Cardiac septum (tissue), 1 donor: ENCODE measurements at regions of chr7 and their contacts with region 1.

Region 1: GRCh38 chr7:74083117-74083876 is at the start of gene LIMK1:
- DNase-seq: peak; percentile 92
- total RNA-seq, gene LIMK1: 13.6 TPM

Region 2: DNA sequence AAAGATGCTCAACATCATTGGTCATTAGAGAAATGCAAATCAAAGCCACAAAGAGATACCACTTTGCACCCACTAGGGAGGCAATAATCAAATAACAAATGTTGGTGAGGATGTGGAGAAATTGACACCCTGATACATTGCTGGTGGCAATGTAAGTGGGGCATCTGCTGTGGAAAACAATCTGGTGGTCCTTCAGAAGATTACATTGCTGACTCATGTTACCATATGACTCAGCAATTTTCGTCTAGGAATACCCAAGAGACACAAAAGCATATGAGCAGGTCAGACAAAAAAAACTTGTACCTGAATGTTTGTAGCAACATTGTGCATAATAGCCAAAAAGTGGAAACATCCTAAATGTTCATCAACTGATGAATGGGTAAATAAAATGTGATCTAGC is 308.4 kb before region 1 on chr7:
- intact Hi-C with region 1: no loop called
- DNase-seq: no peak

Region 3: GRCh38 chr7:73894733-73895551 is 188.4 kb before region 1 on chr7:
- intact Hi-C with region 1: no loop called
- DNase-seq: no peak

Region 4: GRCh38 chr7:74002474-74003017 is 80.8 kb before region 1 on chr7:
- intact Hi-C with region 1: no loop called
- DNase-seq: peak; percentile 86

Region 5: DNA sequence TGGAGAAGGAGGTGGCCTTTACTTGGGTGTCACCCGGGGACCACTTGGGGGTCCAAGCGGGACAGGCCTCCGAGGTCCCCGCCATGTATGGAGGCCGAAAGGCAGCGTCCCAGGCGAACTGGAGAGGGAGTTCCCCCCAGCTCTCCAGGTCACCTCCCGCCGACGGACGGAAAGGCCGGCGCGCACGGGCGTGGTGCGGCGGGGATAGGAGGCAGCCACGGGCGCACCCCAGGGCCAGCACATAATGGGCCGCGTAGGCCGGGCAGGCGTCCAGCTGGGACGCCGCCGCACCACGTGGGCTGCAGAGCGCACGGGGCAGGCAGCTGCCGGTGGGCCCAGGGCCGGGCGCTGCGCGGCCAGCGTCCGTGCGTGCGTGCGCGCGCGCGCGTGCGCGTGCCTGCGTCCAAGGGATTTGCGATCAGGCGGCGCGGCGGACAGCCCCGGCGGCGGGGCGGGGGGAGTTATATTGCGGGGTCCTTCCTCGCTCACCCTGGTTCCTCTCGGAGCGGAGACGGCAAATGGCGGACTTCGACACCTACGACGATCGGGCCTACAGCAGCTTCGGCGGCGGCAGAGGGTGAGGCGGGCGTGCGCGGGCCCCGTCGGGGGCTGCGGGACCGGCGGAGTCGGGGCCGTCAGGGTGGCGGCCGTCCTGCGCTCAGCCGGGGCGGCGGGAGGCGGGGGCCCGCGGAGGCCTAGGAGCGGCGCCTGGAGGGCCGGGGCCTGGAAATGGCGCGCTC is 90.7 kb after region 1 on chr7 and contains the start of gene EIF4H:
- intact Hi-C with region 1: loop called (anchors 5 kb)
- DNase-seq: peak; percentile 98
- total RNA-seq, gene EIF4H: 168 TPM